ENCODE measurements at regions of chr5 and their contacts with region 1.

Region 1: DNA sequence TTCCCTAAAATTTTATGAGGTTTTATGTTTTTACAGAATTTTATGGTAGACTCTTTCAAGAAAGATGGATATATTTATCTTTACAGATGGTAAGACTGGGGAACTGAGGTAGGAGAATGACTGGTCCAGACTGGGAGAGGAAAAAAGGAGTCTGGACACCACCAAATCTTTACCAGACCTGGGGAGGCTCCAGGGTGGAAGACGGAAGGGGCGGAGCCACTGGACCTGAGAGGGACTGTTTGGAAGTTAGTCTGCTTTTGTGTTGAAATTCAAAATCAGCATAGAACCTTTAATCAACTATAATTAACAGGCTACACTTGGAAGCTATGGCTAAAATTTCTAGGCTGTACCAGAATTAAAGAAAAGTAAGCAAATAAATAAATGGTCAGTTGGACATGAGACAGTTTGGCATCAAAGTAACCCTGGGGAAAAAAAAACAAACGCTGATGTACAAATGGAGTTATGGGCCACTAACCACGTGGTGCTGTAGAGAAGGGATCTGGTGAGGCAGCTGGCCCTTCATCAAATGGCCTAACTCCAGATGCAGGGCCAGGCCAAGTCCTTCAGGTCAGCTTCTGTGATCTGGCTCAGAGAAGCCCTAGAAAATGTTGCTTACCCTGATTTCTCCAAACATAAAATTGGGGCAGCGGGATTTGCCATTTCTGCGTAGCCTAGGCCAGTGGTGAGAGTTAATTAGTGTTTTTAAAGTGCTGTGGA is 155.1 kb downstream of the ARSB start:
- DNase-seq: peak; percentile 77 to 94 (median 91)
- ATAC-seq: peak; percentile 92 to 93
- H3K4me3 ChIP-seq: no peak overlapping the region
- H3K27ac ChIP-seq: peak overlapping the region; percentile 57
- H3K4me1 ChIP-seq: peaks cover 4% of the 10 kb centered on the region
- H3K27me3 ChIP-seq: no peaks in the 10 kb centered on the region

Region 2: GRCh38 chr5:78699565-78700241 is 130.3 kb before region 1 on chr5:
- intact Hi-C with region 1: no loop called
- DNase-seq: peak in 1 of 3 donors; percentile 34
- ATAC-seq: peak; percentile 22 to 73
- H3K4me3 ChIP-seq: no peak overlapping the region
- H3K27ac ChIP-seq: no peak overlapping the region
- H3K4me1 ChIP-seq: peaks cover 2% of the 10 kb centered on the region
- H3K27me3 ChIP-seq: no peaks in the 10 kb centered on the region

Region 3: GRCh38 chr5:78886341-78887230 is 56.6 kb after region 1 on chr5:
- intact Hi-C with region 1: loop called in 1 of 4 experiments (anchors 10 kb)
- DNase-seq: no peak
- ATAC-seq: no peak
- H3K4me3 ChIP-seq: no peak overlapping the region
- H3K27ac ChIP-seq: no peak overlapping the region
- H3K4me1 ChIP-seq: no peaks in the 10 kb centered on the region
- H3K27me3 ChIP-seq: no peaks in the 10 kb centered on the region